Aorta (tissue), 5 donors: ENCODE measurements at regions of chr21 and their contacts with region 1.

Region 1: GRCh38 chr21:36141513-36141925 is 6.6 kb downstream of the CBR3 start:
- DNase-seq: peak; percentile 77 to 84
- ATAC-seq: peak; percentile 70
- H3K4me3 ChIP-seq: no peak overlapping the region
- H3K27ac ChIP-seq: no peak overlapping the region
- H3K4me1 ChIP-seq: no peaks in the 10 kb centered on the region
- H3K27me3 ChIP-seq: no peaks in the 10 kb centered on the region

Region 2: GRCh38 chr21:36209626-36210171 is 68.2 kb after region 1 on chr21:
- intact Hi-C with region 1: loop called in 1 of 2 experiments (anchors 5 kb)
- DNase-seq: no peak
- ATAC-seq: no peak
- H3K4me3 ChIP-seq: no peak overlapping the region
- H3K27ac ChIP-seq: no peak overlapping the region
- H3K4me1 ChIP-seq: no peaks in the 10 kb centered on the region
- H3K27me3 ChIP-seq: no peaks in the 10 kb centered on the region

Region 3: DNA sequence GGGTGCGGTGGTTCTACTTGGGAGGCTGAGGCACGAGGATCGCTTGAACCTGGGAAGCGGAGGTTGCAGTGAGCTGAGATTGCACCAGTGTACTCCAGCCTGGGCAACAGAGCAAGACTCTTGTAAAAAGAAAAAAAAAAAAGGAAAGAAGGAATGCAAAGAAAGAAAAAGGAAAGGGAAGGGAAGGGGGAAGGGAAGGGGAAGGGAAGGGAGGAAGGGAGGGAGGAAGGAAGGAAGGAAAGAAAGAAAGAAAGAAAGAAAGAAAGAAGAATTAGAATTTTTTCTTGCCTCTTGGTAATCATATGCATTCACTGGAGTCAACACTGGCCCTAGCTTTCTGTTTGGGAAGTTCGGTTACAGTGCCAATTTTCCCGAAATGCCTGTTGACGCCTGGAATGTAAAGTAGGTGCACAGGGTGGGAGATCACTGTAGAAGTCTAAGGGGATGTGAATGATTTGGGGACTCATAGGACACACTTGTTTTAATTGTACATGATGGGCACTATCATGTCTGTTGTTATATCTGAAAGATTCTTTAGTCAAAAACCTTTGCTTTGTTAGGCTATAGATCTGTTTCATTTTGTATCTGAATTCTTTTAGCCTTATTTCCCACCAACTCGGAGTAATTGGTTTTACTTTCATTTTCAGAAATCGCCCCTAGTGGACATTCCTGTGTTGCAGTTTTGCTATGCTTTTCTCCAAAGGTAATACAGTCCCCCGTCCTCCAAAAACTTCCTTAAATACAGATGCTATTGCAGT is 118.7 kb after region 1 on chr21:
- intact Hi-C with region 1: loop called in 1 of 2 experiments (anchors 10 kb)
- DNase-seq: no peak
- ATAC-seq: peak; percentile 85
- H3K4me3 ChIP-seq: peak overlapping the region; percentile 70 to 91
- H3K27ac ChIP-seq: peak overlapping the region in 1 of 2 donors; percentile 45
- H3K4me1 ChIP-seq: no peaks in the 10 kb centered on the region
- H3K27me3 ChIP-seq: no peaks in the 10 kb centered on the region

Region 4: DNA sequence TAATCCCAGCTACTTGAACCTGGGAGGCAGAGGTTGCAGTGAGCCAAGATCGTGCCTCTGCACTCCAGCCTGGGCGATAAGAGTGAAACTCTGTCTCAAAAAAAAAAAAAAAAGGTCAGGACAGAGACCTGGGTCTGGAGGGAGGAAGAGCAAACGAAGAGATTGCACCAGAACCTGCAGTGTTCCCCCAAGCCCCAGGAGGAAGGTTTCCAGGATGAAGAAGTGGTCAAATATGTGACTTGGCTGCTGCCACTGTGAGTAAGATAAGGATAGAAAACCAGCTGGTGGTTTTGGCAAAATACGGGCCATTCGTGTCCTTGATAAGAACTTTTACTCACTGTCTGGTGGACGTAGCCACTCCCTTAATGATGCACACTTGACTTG is 296.2 kb after region 1 on chr21:
- intact Hi-C with region 1: no loop called
- DNase-seq: peak in 1 of 2 donors; percentile 5
- ATAC-seq: no peak
- H3K4me3 ChIP-seq: no peak overlapping the region
- H3K27ac ChIP-seq: no peak overlapping the region
- H3K4me1 ChIP-seq: no peaks in the 10 kb centered on the region
- H3K27me3 ChIP-seq: no peaks in the 10 kb centered on the region